ENCODE measurements at regions of chr7 and their contacts with region 1.

Region 1: GRCh38 chr7:100545360-100546128 is 6.5 kb downstream of the AGFG2 start:
- DNase-seq: peak; percentile 83
- ATAC-seq: peak; percentile 76
- H3K4me3 ChIP-seq: peak overlapping the region; percentile 56
- H3K27ac ChIP-seq: peak overlapping the region; percentile 99
- H3K4me1 ChIP-seq: peaks cover 75% of the 10 kb centered on the region
- H3K27me3 ChIP-seq: no peaks in the 10 kb centered on the region
- CTCF ChIP-seq: peak; percentile 9 to 26 (median 18); a peak in 2 of 6 replicates
- EP300 ChIP-seq: peak in 1 of 2 experiments; percentile 75; a peak in 3 of 4 replicates
- POLR2A ChIP-seq: peak; percentile 63
- RAD21 ChIP-seq: peak; percentile 40; the same call in 1 of the 2 replicates

Region 2: GRCh38 chr7:100469227-100470044 is 76.1 kb before region 1 on chr7:
- CTCF ChIA-PET with region 1: interaction called, 22 read pairs
- POLR2A ChIA-PET with region 1: interaction called, 8 read pairs
- RAD21 ChIA-PET with region 1: interaction called, 5 read pairs
- SMC1A ChIA-PET with region 1: no interaction called
- in situ Hi-C with region 1: no loop called
- intact Hi-C with region 1: no loop called
- DNase-seq: no peak
- ATAC-seq: peak; percentile 94
- H3K4me3 ChIP-seq: no peak overlapping the region
- H3K27ac ChIP-seq: no peak overlapping the region
- H3K4me1 ChIP-seq: peaks cover 12% of the 10 kb centered on the region
- H3K27me3 ChIP-seq: no peaks in the 10 kb centered on the region
- CTCF ChIP-seq: peak; percentile 95 to 96 (median 96)
- EP300 ChIP-seq: no peak
- POLR2A ChIP-seq: peak; percentile 63; the same call in 1 of the 2 replicates
- RAD21 ChIP-seq: peak; percentile 85

Region 3: DNA sequence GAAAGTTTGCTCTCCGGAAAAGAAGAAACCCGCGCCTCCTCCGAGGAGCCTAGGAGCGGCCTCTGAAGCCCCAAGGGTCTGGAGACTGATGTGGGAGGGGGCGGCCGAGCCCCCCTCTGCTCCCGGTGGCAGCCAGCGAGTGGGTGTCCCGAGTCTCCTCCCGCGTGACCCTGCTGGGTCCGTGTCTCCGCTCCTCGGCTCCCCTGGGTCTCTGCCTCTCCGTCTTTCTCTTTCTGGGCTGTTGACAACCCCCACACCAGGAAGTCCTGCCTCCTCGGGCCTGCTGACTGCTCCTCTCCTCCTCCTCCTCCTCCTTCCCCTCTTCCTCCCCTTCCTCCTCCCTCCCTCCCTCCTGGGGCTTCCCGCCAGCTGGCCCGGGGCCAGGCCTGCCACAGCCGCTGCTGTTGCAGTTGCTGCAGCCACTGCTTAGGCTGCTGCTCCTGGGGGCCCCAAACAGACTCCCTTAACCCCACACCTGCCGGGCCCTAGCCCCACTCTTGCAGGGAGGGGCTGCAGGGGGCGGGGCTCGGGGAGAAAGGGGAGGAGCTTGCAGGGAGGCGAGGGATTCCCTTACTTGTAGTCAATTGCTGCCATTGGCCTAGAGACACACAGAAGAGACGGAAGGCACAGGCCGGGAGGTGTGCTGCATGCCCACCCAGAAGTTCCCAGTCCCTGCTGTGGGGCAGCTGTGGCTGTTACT is 66.4 kb before region 1 on chr7 and contains the start of gene TSC22D4:
- CTCF ChIA-PET with region 1: interaction called, 16 read pairs
- POLR2A ChIA-PET with region 1: interaction called, 12 read pairs
- RAD21 ChIA-PET with region 1: interaction called, 32 read pairs
- SMC1A ChIA-PET with region 1: interaction called, 16 read pairs
- in situ Hi-C with region 1: no loop called
- intact Hi-C with region 1: loop called (anchors 5 kb)
- DNase-seq: peak; percentile 79
- ATAC-seq: peak; percentile 85
- H3K4me3 ChIP-seq: peak within 1 kb of the TSS; percentile 99
- H3K27ac ChIP-seq: peak within 1 kb of the TSS; percentile 89
- H3K4me1 ChIP-seq: peaks cover 27% of the 10 kb centered on the region
- H3K27me3 ChIP-seq: no peaks in the 10 kb centered on the region
- CTCF ChIP-seq: no peak
- EP300 ChIP-seq: no peak
- POLR2A ChIP-seq: peak; percentile 87
- RAD21 ChIP-seq: no peak
- polyA plus RNA-seq, gene TSC22D4: 0.50 to 1.2 TPM

Region 4: DNA sequence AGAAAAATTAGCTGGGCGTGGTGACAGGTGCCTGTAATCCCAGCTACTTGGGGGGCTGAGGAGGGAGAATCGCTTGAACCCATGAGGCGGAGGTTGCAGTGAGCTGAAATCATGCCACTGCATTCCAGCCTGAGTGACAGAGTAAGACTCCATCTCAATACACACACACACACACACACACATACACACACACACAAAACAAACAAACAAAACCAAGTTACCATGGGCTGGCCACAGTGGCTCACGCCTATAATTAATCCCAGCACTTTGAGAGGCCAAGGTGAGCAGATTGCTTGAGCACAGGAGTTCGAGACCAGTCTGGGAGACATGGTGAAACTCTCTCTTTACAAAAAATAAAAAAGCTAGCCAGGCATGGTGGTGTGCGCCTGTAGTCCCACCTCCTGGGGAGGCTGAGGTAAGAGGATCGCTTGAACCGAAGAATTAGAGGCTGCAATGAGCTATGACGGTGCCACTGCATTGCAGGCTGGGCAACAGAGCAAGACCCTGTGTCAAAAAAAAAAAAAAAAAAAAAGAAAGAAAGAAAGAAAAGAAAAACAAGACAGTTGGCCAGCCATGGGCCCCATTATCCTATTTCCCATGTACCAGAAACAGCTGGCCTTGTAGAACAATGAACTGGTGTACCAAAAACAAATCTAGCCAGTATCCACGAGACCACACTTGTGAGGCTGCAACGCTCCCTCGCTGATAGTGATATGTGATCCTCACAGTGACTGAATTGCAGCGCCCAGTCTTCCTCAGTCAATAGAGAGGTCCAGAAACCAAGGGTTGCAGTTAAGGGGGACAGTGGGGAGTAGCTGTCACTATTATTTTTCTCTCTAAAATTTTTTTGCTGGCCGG is 13.2 kb before region 1 on chr7:
- CTCF ChIA-PET with region 1: interaction called, 10 read pairs
- POLR2A ChIA-PET with region 1: interaction called, 10 read pairs
- RAD21 ChIA-PET with region 1: interaction called, 12 read pairs
- SMC1A ChIA-PET with region 1: interaction called, 24 read pairs
- in situ Hi-C with region 1: no loop called
- intact Hi-C with region 1: no loop called
- DNase-seq: no peak
- ATAC-seq: no peak
- H3K4me3 ChIP-seq: no peak overlapping the region
- H3K27ac ChIP-seq: no peak overlapping the region
- H3K4me1 ChIP-seq: peaks cover 10% of the 10 kb centered on the region
- H3K27me3 ChIP-seq: no peaks in the 10 kb centered on the region
- CTCF ChIP-seq: no peak
- EP300 ChIP-seq: no peak
- POLR2A ChIP-seq: no peak
- RAD21 ChIP-seq: no peak

Region 5: GRCh38 chr7:100563809-100564400 is 18.4 kb after region 1 on chr7:
- CTCF ChIA-PET with region 1: interaction called, 101 read pairs
- POLR2A ChIA-PET with region 1: interaction called, 13 read pairs
- RAD21 ChIA-PET with region 1: interaction called, 90 read pairs
- SMC1A ChIA-PET with region 1: interaction called, 127 read pairs
- in situ Hi-C with region 1: no loop called
- intact Hi-C with region 1: no loop called
- DNase-seq: no peak
- ATAC-seq: peak; percentile 84
- H3K4me3 ChIP-seq: no peak overlapping the region
- H3K27ac ChIP-seq: no peak overlapping the region
- H3K4me1 ChIP-seq: peaks cover 8% of the 10 kb centered on the region
- H3K27me3 ChIP-seq: no peaks in the 10 kb centered on the region
- CTCF ChIP-seq: peak; percentile 94 to 98 (median 97)
- EP300 ChIP-seq: no peak
- POLR2A ChIP-seq: peak; percentile 35
- RAD21 ChIP-seq: peak; percentile 71

Region 6: GRCh38 chr7:100586266-100587025 is 40.9 kb after region 1 on chr7 and contains the start of gene FBXO24:
- CTCF ChIA-PET with region 1: interaction called, 4 read pairs
- POLR2A ChIA-PET with region 1: interaction called, 47 read pairs
- RAD21 ChIA-PET with region 1: interaction called, 20 read pairs
- SMC1A ChIA-PET with region 1: interaction called, 5 read pairs
- in situ Hi-C with region 1: no loop called
- intact Hi-C with region 1: no loop called
- DNase-seq: peak; percentile 100
- ATAC-seq: peak; percentile 90
- H3K4me3 ChIP-seq: peak within 1 kb of the TSS; percentile 83
- H3K27ac ChIP-seq: peak within 1 kb of the TSS; percentile 88
- H3K4me1 ChIP-seq: peaks cover 24% of the 10 kb centered on the region
- H3K27me3 ChIP-seq: no peaks in the 10 kb centered on the region
- CTCF ChIP-seq: no peak
- EP300 ChIP-seq: 0 out of 4 replicates have a peak, but pooled peaks of 1 of the 2 experiments have one; percentile 3
- POLR2A ChIP-seq: peak; percentile 53; the same call in 1 of the 2 replicates
- RAD21 ChIP-seq: no peak
- polyA plus RNA-seq, gene FBXO24: not detected

Measured in GM12878 (cell line).